ENCODE measurements at regions of chr21 and their contacts with region 1.

Region 1: GRCh38 chr21:40689840-40690369 is 157.1 kb downstream of the DSCAM start:
- DNase-seq: no peak
- H3K4me3 ChIP-seq: no peak overlapping the region
- CTCF ChIP-seq: no peak

Region 2: GRCh38 chr21:40765811-40766210 is 75.9 kb after region 1 on chr21:
- in situ Hi-C with region 1: loop called (anchors 5 kb)
- DNase-seq: no peak
- H3K4me3 ChIP-seq: no peak overlapping the region
- CTCF ChIP-seq: no peak

Measured in astrocyte of the cerebellum (primary cell).